CD4-positive, alpha-beta T cell (primary cell): ENCODE measurements at regions of chr1 and their contacts with region 1.

Region 1: DNA sequence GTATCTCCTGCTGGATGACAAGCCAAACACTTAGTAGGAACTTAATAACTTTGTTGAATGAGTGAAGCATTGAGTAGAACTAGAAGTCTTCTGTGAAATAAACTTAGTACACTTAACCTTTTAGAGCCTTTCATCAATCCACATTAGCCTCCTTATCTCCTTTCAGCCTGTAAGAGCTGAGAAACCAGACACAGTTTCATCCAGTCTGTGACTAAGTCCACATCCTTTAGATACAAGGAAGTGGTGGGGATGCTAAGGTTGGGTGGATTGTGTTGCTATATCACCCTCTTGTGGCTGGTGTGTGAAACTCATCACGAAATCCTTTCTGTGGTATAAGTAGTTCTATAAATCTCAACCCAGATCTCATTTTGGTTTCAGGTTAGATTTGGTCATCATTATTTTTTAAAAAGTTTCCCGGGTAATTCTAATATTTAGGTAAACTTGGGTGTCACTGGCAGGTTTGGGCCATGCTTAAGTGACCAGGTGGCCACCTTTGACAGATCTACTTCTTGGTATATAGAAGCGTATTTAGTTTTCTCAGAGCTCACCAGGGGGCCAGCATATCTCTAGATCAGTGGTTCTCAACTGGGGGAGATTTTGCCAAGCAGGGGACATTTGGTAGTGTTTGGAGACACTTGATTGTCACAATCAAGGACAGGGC is 27.8 kb upstream of the CD84 start:
- DNase-seq: peak in 12 of 14 experiments; percentile 26 to 90 (median 53)
- ATAC-seq: peak; percentile 98
- H3K4me3 ChIP-seq: no peak overlapping the region
- H3K4me3 Mint-ChIP-seq: peak overlapping the region; percentile 28
- H3K27ac ChIP-seq: no peak overlapping the region
- H3K27ac Mint-ChIP-seq: peak overlapping the region; percentile 67
- H3K4me1 ChIP-seq: peaks cover 29% of the 10 kb centered on the region
- H3K4me1 Mint-ChIP-seq: peaks cover 45% of the 10 kb centered on the region
- H3K27me3 ChIP-seq: no peaks in the 10 kb centered on the region
- H3K27me3 Mint-ChIP-seq: no peaks in the 10 kb centered on the region
- CTCF ChIP-seq: peak; percentile 87

Region 2: DNA sequence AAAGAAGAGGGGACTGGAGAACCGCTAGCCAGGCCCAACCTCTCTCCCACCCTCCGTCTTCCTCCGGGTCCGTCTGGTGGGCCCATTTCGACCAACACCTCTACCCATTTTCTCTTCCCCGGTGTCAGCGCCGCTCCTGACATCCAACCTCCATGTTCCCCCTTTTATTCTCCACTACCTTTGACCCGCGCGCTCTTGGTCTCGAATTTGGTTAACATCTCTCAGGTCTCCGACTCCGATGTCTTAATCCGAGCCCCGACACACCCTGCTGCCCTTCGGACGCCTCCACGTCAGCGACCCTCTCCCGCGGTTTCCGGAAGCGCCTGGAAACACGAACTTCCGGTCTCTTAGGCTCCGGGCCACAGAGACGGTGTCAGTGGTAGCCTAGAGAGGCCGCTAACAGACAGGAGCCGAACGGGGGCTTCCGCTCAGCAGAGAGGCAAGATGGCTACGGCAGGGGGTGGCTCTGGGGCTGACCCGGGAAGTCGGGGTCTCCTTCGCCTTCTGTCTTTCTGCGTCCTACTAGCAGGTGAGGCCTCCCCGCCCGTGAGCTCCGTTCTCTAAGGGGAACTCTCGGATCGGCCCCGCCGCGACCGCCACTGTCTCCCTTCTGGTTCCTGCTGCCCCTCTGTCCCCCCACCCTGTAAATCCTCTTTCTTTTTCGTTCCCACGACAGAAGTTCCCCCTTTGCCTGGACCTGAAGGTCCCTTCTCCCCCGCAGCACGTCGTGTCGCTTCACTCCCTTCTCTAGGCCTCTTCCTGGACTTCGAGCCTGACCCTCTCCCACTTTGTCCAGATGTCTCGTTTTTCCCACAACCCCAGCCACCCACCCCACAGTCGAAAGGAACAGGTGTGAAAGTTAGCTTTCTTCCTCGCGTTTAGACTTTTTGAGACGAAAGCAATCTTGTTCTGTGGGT is 263.9 kb before region 1 on chr1 and contains the starts of genes COPA and NCSTN:
- CTCF ChIA-PET with region 1: no interaction called
- POLR2A ChIA-PET with region 1: no interaction called
- intact Hi-C with region 1: loop called in 1 of 2 experiments (anchors 1 kb)
- DNase-seq: peak; percentile 79 to 96 (median 84)
- ATAC-seq: peak; percentile 98
- H3K4me3 ChIP-seq: peak within 1 kb of the TSS; percentile 96
- H3K4me3 Mint-ChIP-seq: peak within 1 kb of the TSS; percentile 100
- H3K27ac ChIP-seq: peak within 1 kb of the TSS; percentile 88 to 94
- H3K27ac Mint-ChIP-seq: peak within 1 kb of the TSS; percentile 97
- H3K4me1 ChIP-seq: peaks cover 18% of the 10 kb centered on the region
- H3K4me1 Mint-ChIP-seq: peaks cover 69% of the 10 kb centered on the region
- H3K27me3 ChIP-seq: no peaks in the 10 kb centered on the region
- H3K27me3 Mint-ChIP-seq: no peaks in the 10 kb centered on the region
- CTCF ChIP-seq: no peak
- total RNA-seq, gene COPA: 95.0 to 107 TPM
- total RNA-seq, gene NCSTN: 54.9 to 56.6 TPM

Region 3: GRCh38 chr1:160428655-160429054 is 178.5 kb before region 1 on chr1:
- CTCF ChIA-PET with region 1: interaction called, 12 read pairs
- POLR2A ChIA-PET with region 1: interaction called, 6 read pairs
- intact Hi-C with region 1: loop called (anchors 1 kb)
- DNase-seq: peak in 10 of 14 experiments; percentile 15 to 82 (median 42)
- ATAC-seq: peak; percentile 76
- H3K4me3 ChIP-seq: no peak overlapping the region
- H3K4me3 Mint-ChIP-seq: peak overlapping the region; percentile 72
- H3K27ac ChIP-seq: peak overlapping the region; percentile 47 to 74
- H3K27ac Mint-ChIP-seq: peak overlapping the region; percentile 88
- H3K4me1 ChIP-seq: peaks cover 52% of the 10 kb centered on the region
- H3K4me1 Mint-ChIP-seq: peaks cover 63% of the 10 kb centered on the region
- H3K27me3 ChIP-seq: no peaks in the 10 kb centered on the region
- H3K27me3 Mint-ChIP-seq: no peaks in the 10 kb centered on the region
- CTCF ChIP-seq: peak; percentile 86

Region 4: GRCh38 chr1:160539990-160540858 is 66.9 kb before region 1 on chr1:
- CTCF ChIA-PET with region 1: interaction called, 15 read pairs
- POLR2A ChIA-PET with region 1: interaction called, 15 read pairs
- intact Hi-C with region 1: loop called (anchors 1 to 2 kb)
- DNase-seq: peak in 12 of 14 experiments; percentile 19 to 91 (median 34)
- ATAC-seq: peak; percentile 90
- H3K4me3 ChIP-seq: peak overlapping the region; percentile 13
- H3K4me3 Mint-ChIP-seq: peak overlapping the region; percentile 59
- H3K27ac ChIP-seq: peak overlapping the region; percentile 54 to 68
- H3K27ac Mint-ChIP-seq: peak overlapping the region; percentile 88
- H3K4me1 ChIP-seq: peaks cover 55% of the 10 kb centered on the region
- H3K4me1 Mint-ChIP-seq: peaks cover 64% of the 10 kb centered on the region
- H3K27me3 ChIP-seq: no peaks in the 10 kb centered on the region
- H3K27me3 Mint-ChIP-seq: no peaks in the 10 kb centered on the region
- CTCF ChIP-seq: no peak